CD4-positive, alpha-beta T cell (primary cell): ENCODE measurements at regions of chr18 and their contacts with region 1.

Region 1: DNA sequence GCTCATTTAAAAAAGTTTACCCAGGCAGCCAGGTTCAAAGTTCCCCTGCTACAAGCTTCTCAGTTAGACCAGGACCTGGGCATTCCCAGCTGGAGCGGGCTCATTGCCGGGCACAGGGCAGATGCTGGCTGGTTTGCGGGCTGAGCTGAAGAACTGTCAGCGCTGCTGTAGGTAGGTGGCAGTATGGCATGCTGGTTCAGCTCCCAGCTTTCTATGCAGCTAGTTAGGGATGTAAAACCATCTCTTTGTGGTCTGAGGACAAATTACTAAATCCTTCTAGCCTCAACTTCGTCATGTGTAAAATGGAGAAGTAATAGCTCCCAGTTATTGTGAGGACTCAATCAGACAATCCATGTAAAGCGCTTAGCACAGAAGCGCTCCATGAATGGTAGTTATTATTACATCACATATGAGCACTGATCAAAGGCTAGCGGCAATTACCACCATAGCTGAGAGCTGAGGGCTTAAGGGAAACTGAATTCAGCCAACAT is 2.4 kb upstream of the LDLRAD4 start:
- DNase-seq: peak; percentile 30 to 82 (median 51)
- ATAC-seq: peak; percentile 57
- H3K4me3 ChIP-seq: peak overlapping the region; percentile 58
- H3K4me3 Mint-ChIP-seq: peak overlapping the region; percentile 98
- H3K27ac ChIP-seq: peak overlapping the region in 1 of 2 donors; percentile 15
- H3K27ac Mint-ChIP-seq: peak overlapping the region; percentile 90
- H3K4me1 ChIP-seq: peaks cover 27% of the 10 kb centered on the region
- H3K4me1 Mint-ChIP-seq: peaks cover 35% of the 10 kb centered on the region
- H3K27me3 ChIP-seq: peaks cover 0 to 5% of the 10 kb centered on the region in 2 experiments
- H3K27me3 Mint-ChIP-seq: peaks cover 9% of the 10 kb centered on the region
- CTCF ChIP-seq: peak; percentile 81

Region 2: DNA sequence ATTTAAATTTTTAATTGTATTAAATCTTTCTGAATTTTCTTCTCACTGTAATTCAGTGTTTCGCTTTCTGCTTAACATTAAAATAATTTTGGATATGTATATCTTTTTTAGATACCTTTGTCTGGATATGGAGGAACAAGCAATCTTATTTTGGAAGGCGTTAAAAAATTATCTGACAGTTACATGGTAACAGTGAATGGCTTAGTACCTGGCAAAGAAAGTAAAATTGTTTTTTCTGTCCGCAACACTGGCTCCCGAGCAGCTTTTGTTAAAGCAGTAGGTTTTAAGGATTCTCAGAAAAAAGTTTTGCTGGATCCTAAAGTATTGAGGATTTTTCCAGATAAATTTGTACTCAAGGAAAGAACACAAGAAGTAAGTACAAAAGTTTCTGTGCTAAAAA is 129.2 kb before region 1 on chr18:
- CTCF ChIA-PET with region 1: no interaction called
- POLR2A ChIA-PET with region 1: no interaction called
- intact Hi-C with region 1: no loop called
- DNase-seq: no peak
- ATAC-seq: no peak
- H3K4me3 ChIP-seq: no peak overlapping the region
- H3K4me3 Mint-ChIP-seq: no peak overlapping the region
- H3K27ac ChIP-seq: no peak overlapping the region
- H3K27ac Mint-ChIP-seq: no peak overlapping the region
- H3K4me1 ChIP-seq: no peaks in the 10 kb centered on the region
- H3K4me1 Mint-ChIP-seq: no peaks in the 10 kb centered on the region
- H3K27me3 ChIP-seq: no peaks in the 10 kb centered on the region
- H3K27me3 Mint-ChIP-seq: no peaks in the 10 kb centered on the region
- CTCF ChIP-seq: no peak

Region 3: DNA sequence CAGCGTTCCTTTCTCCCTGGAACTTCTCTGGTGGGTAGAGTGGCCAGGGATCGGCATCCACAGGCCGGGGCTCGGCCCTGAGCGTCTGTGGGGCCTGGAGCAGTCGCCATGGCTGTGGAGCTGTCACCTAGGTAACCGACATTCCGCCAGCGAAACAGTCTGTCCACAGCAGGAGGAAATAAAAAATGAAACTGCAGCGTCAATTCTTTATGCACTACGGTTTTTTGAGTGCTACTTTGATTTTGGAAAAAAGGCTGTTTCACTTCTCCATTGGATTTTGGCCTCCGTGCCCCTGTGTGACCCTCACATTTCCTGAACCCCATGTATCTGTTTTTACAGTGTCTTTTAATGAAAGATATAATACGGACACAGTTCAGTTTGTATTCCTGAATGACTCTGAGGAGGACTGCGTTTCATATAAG is 165.8 kb after region 1 on chr18:
- CTCF ChIA-PET with region 1: interaction called, 3 read pairs
- POLR2A ChIA-PET with region 1: interaction called, 12 read pairs
- intact Hi-C with region 1: loop called in 1 of 2 experiments (anchors 5 kb)
- DNase-seq: peak in 8 of 14 experiments; percentile 34 to 84 (median 52)
- ATAC-seq: peak; percentile 41
- H3K4me3 ChIP-seq: peak overlapping the region; percentile 57
- H3K4me3 Mint-ChIP-seq: peak overlapping the region; percentile 95
- H3K27ac ChIP-seq: peak overlapping the region; percentile 91 to 94
- H3K27ac Mint-ChIP-seq: peak overlapping the region; percentile 98
- H3K4me1 ChIP-seq: peaks cover 64% of the 10 kb centered on the region
- H3K4me1 Mint-ChIP-seq: peaks cover 80% of the 10 kb centered on the region
- H3K27me3 ChIP-seq: no peaks in the 10 kb centered on the region
- H3K27me3 Mint-ChIP-seq: no peaks in the 10 kb centered on the region
- CTCF ChIP-seq: no peak

Region 4: DNA sequence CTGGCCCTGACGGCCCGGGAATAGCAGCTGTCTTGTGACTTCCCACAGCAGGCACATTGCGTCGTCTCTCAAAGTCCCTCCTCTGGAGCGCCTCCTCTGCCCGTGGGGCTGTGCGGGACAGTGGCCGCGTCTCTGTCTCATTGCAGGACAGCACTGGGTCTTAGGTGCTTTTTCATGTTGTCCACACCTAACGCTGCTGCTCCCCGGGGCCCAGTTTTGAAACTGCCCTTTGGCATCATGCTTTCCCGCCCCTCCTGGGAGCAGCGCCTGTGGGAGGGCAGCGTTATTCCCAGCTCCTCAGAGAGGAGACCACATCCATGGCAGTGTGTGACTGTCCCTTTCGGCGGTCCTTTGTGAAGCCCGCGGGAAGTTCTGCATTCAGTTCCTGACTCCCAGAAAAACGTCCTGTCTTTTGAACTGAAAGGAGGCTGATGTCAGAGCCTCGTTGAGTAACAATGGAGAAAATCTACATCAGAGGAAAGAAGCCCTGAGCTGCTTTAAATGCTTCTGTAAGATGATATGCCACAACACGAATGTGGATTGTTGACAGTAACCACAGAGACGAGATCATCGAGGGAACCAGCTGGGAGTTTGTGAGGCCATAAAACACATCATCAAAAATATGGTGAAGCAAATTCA is 284.2 kb after region 1 on chr18:
- CTCF ChIA-PET with region 1: interaction called, 3 read pairs
- POLR2A ChIA-PET with region 1: interaction called, 4 read pairs
- intact Hi-C with region 1: loop called in 1 of 2 experiments (anchors 10 kb)
- DNase-seq: peak in 1 of 14 experiments; percentile 23
- ATAC-seq: peak; percentile 42
- H3K4me3 ChIP-seq: no peak overlapping the region
- H3K4me3 Mint-ChIP-seq: no peak overlapping the region
- H3K27ac ChIP-seq: no peak overlapping the region
- H3K27ac Mint-ChIP-seq: peak overlapping the region; percentile 73
- H3K4me1 ChIP-seq: peaks cover 18% of the 10 kb centered on the region
- H3K4me1 Mint-ChIP-seq: peaks cover 36% of the 10 kb centered on the region
- H3K27me3 ChIP-seq: no peaks in the 10 kb centered on the region
- H3K27me3 Mint-ChIP-seq: no peaks in the 10 kb centered on the region
- CTCF ChIP-seq: no peak

Region 5: DNA sequence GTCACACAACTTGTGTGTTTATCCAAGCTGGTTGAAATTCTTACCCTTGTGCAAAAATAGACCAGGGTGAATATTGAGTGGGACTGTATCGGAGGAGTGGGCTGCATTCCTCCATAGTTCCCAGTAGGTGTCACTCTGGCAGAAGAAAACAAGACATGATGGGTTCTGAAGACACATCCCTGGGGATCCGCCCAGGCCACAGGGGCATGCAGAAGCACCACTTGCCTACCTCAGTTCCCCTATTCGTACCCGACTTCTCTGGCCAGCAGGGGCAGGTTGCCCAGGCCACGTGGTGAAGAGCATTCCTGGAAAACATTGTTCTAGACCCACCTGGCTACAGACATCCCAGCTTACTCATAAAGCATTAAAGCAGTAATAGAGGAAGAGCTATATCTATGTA is 342.0 kb after region 1 on chr18:
- CTCF ChIA-PET with region 1: interaction called, 4 read pairs
- POLR2A ChIA-PET with region 1: no interaction called
- intact Hi-C with region 1: loop called in 1 of 2 experiments (anchors 5 kb)
- DNase-seq: peak in 5 of 14 experiments; percentile 16 to 61 (median 35)
- ATAC-seq: peak; percentile 63
- H3K4me3 ChIP-seq: no peak overlapping the region
- H3K4me3 Mint-ChIP-seq: no peak overlapping the region
- H3K27ac ChIP-seq: no peak overlapping the region
- H3K27ac Mint-ChIP-seq: peak overlapping the region; percentile 45
- H3K4me1 ChIP-seq: peaks cover 11% of the 10 kb centered on the region
- H3K4me1 Mint-ChIP-seq: peaks cover 41% of the 10 kb centered on the region
- H3K27me3 ChIP-seq: no peaks in the 10 kb centered on the region
- H3K27me3 Mint-ChIP-seq: no peaks in the 10 kb centered on the region
- CTCF ChIP-seq: peak; percentile 68

Region 6: DNA sequence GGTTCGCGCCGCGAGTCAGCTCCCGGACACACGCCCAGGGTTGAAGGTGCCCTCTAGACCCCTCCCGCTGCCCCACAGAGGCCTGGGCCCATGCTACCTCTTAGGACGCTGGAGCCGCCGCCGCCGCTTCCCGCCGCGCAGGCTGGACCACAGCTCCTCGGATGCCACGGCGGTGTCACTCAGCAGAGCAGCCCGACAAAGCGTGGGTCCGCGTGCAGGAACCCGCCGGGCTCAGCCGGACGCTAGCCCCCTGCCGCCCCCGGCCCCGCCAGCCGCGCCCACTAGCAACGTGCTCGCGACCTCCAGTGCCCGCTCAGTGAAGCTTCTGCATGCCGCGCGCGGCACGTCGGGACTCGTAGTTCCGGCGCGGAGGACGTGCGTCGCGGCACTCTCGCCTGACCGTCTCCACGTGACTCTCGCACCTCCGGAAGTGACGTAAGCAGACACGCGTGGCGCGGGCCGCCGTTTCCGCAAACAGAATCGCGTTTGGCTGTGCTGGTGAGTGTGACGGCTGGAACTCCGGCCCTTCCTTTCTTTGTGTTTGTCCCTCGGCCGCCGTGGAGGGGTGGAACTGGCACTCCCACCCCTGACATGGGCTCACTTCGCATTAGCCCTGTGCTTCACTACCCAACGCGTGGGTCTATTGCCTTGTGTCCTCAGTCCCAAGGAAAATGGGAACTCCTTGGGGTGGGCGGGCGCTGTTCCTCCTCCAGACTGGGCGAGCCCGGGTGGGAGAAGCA is 510.3 kb after region 1 on chr18 and contains the starts of genes FAM210A and RNMT:
- CTCF ChIA-PET with region 1: no interaction called
- POLR2A ChIA-PET with region 1: interaction called, 6 read pairs
- intact Hi-C with region 1: loop called (anchors 2 kb)
- DNase-seq: peak; percentile 85 to 98 (median 92)
- ATAC-seq: peak; percentile 92
- H3K4me3 ChIP-seq: peak within 1 kb of the TSS; percentile 89
- H3K4me3 Mint-ChIP-seq: peak within 1 kb of the TSS; percentile 89
- H3K27ac ChIP-seq: peak within 1 kb of the TSS; percentile 86 to 91
- H3K27ac Mint-ChIP-seq: peak within 1 kb of the TSS; percentile 84
- H3K4me1 ChIP-seq: peaks cover 33% of the 10 kb centered on the region
- H3K4me1 Mint-ChIP-seq: peaks cover 74% of the 10 kb centered on the region
- H3K27me3 ChIP-seq: no peaks in the 10 kb centered on the region
- H3K27me3 Mint-ChIP-seq: no peaks in the 10 kb centered on the region
- CTCF ChIP-seq: no peak
- total RNA-seq, gene FAM210A: 3.4 to 3.5 TPM
- total RNA-seq, gene RNMT: 128 to 130 TPM